Head of caudate nucleus (tissue), 42 donors: ENCODE measurements at regions of chr2 and their contacts with region 1.

Region 1: GRCh38 chr2:137838255-137839092 is 125.8 kb upstream of the HNMT start:
- DNase-seq: peak in 3 of 42 donors; percentile 8 to 28 (median 15)

Region 2: GRCh38 chr2:136423516-136423996 is 1414.9 kb before region 1 on chr2:
- intact Hi-C with region 1: loop called (anchors 5 kb)
- DNase-seq: peak; percentile 38 to 89 (median 76)

Region 3: DNA sequence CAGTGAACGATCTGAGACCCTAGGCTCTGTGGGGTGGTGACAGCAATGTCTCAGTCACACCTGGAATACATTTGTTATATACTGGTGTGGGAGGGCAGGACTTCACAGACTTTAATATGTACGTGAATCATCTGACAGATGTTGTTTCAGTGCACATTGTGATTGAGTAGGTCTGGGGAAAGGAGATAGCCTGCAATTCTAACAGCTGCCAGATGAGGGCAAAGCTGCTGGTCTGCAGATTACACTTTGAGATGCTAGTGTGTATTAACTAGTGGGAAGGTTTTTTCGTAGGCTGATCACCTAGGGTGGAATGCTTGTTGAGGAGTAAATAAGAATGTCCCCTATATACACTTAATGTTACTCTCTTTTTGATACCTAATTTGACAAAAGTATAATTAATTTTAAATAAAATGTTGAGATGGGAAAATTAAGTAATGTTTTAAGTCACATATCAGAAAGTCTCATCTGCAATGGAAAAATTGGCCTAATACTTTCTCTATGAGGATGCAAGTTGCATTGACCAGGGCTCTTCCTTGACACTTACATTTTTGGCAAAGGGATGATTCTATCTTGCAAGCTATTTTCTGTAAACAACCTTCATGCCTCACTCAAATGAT is 371.1 kb before region 1 on chr2:
- intact Hi-C with region 1: loop called (anchors 5 kb)
- DNase-seq: peak; percentile 4 to 79 (median 50)